ENCODE measurements at regions of chr14 and their contacts with region 1.

Region 1: DNA sequence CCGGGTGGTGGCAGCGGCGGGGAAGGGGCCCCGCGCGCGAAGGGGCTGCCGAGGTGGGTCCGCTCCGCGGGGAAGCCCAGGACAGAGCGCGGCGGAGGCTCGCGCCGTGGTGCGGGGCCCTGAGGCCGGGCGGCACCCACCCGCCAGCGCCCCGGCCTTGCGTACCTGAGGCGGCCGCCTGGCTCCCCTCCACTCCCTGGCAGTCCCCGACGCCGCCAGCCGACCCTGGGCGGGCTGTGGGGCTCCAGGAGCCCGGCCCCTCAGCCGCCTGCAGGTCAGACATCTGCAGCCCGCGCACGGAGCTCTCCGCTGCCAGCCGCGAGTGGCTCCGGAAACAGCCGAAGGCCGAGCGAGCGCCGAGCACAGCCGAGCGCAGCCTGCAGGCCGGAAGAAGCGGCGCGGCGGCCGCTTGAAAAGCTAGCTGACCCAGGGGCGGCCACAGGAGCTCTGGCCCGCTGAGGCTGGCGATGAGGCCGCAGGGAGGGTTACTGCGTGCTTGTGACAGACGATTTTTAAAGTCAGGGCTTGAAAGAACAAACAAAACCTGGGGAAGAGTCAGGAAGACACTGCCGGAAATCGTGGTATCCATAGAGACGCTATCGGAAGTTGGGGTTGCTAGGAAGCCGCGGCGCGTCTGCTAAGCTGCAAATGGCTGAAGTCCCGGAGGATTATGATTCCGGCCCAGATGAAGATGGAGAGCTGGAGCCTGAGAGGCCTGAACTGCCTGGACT is at the starts of genes SAMD15 and TMED8:
- DNase-seq: peak; percentile 69 to 92 (median 82)
- ATAC-seq: peak; percentile 95
- H3K4me3 ChIP-seq: peak within 1 kb of the TSS; percentile 74 to 96
- H3K4me3 Mint-ChIP-seq: peak within 1 kb of the TSS; percentile 89
- H3K27ac ChIP-seq: peak within 1 kb of the TSS; percentile 62 to 91
- H3K27ac Mint-ChIP-seq: peak within 1 kb of the TSS; percentile 87
- H3K4me1 ChIP-seq: peaks cover 17% of the 10 kb centered on the region
- H3K4me1 Mint-ChIP-seq: peaks cover 38% of the 10 kb centered on the region
- H3K27me3 ChIP-seq: no peaks in the 10 kb centered on the region
- H3K27me3 Mint-ChIP-seq: no peaks in the 10 kb centered on the region
- CTCF ChIP-seq: no peak
- total RNA-seq, gene SAMD15: 0.50 to 0.52 TPM
- total RNA-seq, gene TMED8: 4.3 to 4.6 TPM

Region 2: DNA sequence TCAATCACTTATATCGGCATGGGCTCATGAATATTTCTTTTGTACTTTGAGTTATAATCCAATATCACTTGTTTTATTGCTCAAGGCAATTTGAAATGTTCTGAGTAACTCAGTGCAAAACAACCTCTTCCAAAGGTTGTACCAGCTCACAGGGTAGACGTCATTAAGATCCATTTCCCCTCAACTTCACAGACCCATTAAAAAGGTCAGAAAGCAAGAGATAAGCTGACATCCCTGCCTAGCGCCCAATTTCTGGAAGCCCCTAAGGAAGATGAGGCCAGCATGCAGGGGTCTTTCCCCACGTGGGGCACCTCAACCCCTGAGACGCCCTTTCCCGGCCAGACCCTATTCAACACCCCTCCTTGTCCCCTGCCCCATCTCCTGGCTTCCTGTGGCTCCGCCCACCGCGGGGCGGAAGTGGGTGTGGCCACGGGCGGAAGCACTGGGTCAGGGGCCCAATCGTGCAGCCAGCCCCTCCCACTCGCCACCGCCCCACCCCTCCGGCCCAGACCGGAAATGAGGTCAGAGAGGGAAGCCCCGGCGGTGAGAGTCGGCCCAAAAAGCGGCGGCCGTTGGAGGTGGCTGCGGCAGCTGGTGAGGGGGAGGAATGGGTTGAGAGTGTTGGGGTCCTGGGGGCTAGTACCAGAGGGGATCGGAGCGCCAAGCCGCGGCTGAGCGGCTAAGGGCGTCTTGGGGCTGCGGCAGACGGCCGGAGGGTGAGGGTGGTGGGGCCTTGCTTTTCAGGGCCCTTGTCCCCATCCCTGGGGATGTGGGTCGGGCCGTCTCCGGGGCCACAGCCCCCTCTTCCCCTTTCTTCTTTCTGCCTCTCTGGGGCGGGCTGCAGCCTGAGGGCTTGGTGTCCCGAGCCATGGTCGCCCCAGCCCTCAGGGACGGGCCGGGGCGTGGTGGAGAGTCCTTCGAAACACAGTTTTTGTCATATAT is 1225.3 kb before region 1 on chr14 and contains the start of gene GPATCH2L:
- CTCF ChIA-PET with region 1: no interaction called
- POLR2A ChIA-PET with region 1: no interaction called
- intact Hi-C with region 1: loop called in 1 of 2 experiments (anchors 5 kb)
- DNase-seq: peak; percentile 95 to 98 (median 97)
- ATAC-seq: peak; percentile 87
- H3K4me3 ChIP-seq: peak within 1 kb of the TSS; percentile 86 to 99
- H3K4me3 Mint-ChIP-seq: peak within 1 kb of the TSS; percentile 93
- H3K27ac ChIP-seq: peak within 1 kb of the TSS; percentile 85 to 98
- H3K27ac Mint-ChIP-seq: peak within 1 kb of the TSS; percentile 95
- H3K4me1 ChIP-seq: peaks cover 47% of the 10 kb centered on the region
- H3K4me1 Mint-ChIP-seq: peaks cover 54% of the 10 kb centered on the region
- H3K27me3 ChIP-seq: no peaks in the 10 kb centered on the region
- H3K27me3 Mint-ChIP-seq: no peaks in the 10 kb centered on the region
- CTCF ChIP-seq: no peak
- total RNA-seq, gene GPATCH2L: 74.4 to 78.1 TPM

Region 3: GRCh38 chr14:77799863-77800730 is 423.2 kb after region 1 on chr14 and contains the start of gene ADCK1:
- CTCF ChIA-PET with region 1: no interaction called
- POLR2A ChIA-PET with region 1: no interaction called
- intact Hi-C with region 1: loop called in 1 of 2 experiments (anchors 2 kb)
- DNase-seq: peak; percentile 54 to 89 (median 83)
- ATAC-seq: peak; percentile 91
- H3K4me3 ChIP-seq: peak within 1 kb of the TSS; percentile 68 to 96
- H3K4me3 Mint-ChIP-seq: peak within 1 kb of the TSS; percentile 83
- H3K27ac ChIP-seq: peak within 1 kb of the TSS; percentile 73 to 78
- H3K27ac Mint-ChIP-seq: peak within 1 kb of the TSS; percentile 76
- H3K4me1 ChIP-seq: peaks cover 3% of the 10 kb centered on the region
- H3K4me1 Mint-ChIP-seq: peaks cover 10% of the 10 kb centered on the region
- H3K27me3 ChIP-seq: no peaks in the 10 kb centered on the region
- H3K27me3 Mint-ChIP-seq: peaks cover 2% of the 10 kb centered on the region
- CTCF ChIP-seq: no peak
- total RNA-seq, gene ADCK1: 3.6 to 4.7 TPM